Heart right ventricle (tissue), 16 donors: ENCODE measurements at regions of chr6 and their contacts with region 1.

Region 1: GRCh38 chr6:28266962-28267694 is at the start of gene ZSCAN26:
- DNase-seq: peak; percentile 87 to 91
- ATAC-seq: peak; percentile 95 to 99 (median 98)
- H3K4me3 ChIP-seq: peak within 1 kb of the TSS; percentile 48 to 90 (median 80)
- H3K27ac ChIP-seq: peak within 1 kb of the TSS; percentile 67 to 97 (median 84)
- H3K4me1 ChIP-seq: peaks cover 0 to 37% (median 18%) of the 10 kb centered on the region in 9 donors
- H3K27me3 ChIP-seq: no peaks in the 10 kb centered on the region
- CTCF ChIP-seq: no peak
- total RNA-seq, gene ZSCAN26: 8.9 to 17.8 (median 12.8) TPM

Region 2: DNA sequence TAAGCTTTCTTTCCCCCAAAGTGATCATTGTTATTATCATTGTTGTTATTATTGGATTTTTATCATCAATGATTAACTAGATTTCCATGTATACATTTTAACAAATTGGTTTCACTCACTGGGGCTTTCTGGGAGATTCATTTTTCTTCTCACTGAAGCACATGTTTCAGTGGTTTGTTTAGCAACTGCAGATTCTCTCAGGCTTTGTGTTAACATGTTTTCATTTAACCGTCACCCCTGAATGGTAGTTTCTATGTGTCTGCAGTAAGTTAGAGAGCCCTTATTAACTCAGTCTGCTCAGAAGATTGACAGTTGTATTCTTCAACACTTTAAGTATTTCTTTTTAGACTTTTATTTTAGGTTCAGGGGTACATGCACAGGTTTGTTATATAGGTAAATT is 27.5 kb before region 1 on chr6:
- intact Hi-C with region 1: no loop called
- DNase-seq: no peak
- ATAC-seq: no peak
- H3K4me3 ChIP-seq: no peak overlapping the region
- H3K27ac ChIP-seq: no peak overlapping the region
- H3K4me1 ChIP-seq: peaks cover 0 to 14% (median 0%) of the 10 kb centered on the region in 9 donors
- H3K27me3 ChIP-seq: no peaks in the 10 kb centered on the region
- CTCF ChIP-seq: no peak

Region 3: DNA sequence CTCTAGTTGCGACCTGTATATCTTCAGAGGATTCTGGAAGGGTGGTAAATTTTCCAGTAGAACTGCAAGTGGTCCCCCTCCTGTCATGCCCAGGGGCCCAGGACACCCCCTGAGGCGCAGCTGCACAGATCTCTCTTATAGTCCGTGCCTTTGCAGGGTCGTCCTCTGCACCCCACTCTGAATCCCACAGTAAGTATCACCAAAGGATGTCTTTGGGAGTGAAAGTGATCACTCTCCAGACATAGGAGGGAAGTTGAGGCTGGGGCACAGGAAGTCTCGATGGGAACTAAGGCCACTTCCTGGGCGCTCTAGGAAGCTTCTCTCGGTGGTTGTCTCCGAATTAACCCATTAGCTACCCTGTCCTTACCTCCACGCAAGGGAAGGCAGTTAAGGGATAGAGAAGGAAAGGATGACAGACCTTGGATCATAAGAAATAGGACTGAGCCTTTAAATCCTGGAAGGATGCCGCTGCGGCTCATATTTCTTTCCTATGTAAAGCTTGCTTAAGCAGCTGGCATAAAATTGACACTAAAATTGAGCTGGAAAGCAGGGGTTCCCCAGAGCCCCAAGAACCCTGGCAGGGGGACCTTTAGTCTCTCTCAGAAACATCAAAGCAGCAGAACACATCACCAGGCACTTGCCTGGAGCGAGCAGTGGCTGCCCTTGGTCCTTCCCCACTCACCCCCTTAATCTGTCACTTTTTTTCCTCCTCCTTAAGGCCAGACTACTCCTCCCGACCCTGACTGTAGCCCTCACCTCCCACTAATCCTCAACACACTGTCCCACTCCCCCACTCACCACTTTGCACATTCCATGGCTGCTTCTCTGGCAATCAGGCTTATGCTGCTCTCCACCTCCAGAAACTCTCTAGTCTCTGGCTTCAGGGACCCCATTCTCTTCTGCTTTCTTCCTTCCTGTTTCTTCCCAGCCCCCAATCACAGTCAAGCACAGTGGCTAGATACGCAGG is 14.8 kb before region 1 on chr6 and contains the start of gene ZKSCAN4:
- intact Hi-C with region 1: loop called in 1 of 10 experiments (anchors 1 kb)
- DNase-seq: peak; percentile 46 to 94
- ATAC-seq: peak; percentile 95 to 99 (median 98)
- H3K4me3 ChIP-seq: peak within 1 kb of the TSS; percentile 59 to 98 (median 89)
- H3K27ac ChIP-seq: peak within 1 kb of the TSS in 9 of 10 donors; percentile 28 to 87 (median 68)
- H3K4me1 ChIP-seq: peaks cover 9 to 36% (median 22%) of the 10 kb centered on the region in 9 donors
- H3K27me3 ChIP-seq: no peaks in the 10 kb centered on the region
- CTCF ChIP-seq: no peak
- total RNA-seq, gene ZKSCAN4: 0.55 to 3.6 (median 2.9) TPM

Region 4: GRCh38 chr6:28335564-28336283 is 68.6 kb after region 1 on chr6 and contains the start of gene ZSCAN31:
- intact Hi-C with region 1: loop called in 3 of 10 experiments (anchors 5 kb)
- DNase-seq: peak; percentile 87 to 97
- ATAC-seq: peak; percentile 95 to 99 (median 97)
- H3K4me3 ChIP-seq: peak within 1 kb of the TSS; percentile 56 to 90 (median 66)
- H3K27ac ChIP-seq: peak within 1 kb of the TSS; percentile 88 to 97 (median 92)
- H3K4me1 ChIP-seq: peaks cover 0 to 25% (median 11%) of the 10 kb centered on the region in 9 donors
- H3K27me3 ChIP-seq: no peaks in the 10 kb centered on the region
- CTCF ChIP-seq: no peak
- total RNA-seq, gene ZSCAN31: 8.0 to 17.4 (median 11.9) TPM

Region 5: GRCh38 chr6:28349892-28350737 is 83.0 kb after region 1 on chr6 and contains the start of gene ZKSCAN3:
- intact Hi-C with region 1: loop called in 4 of 10 experiments (anchors 5 to 10 kb)
- DNase-seq: peak; percentile 82 to 85
- ATAC-seq: peak; percentile 93 to 97 (median 96)
- H3K4me3 ChIP-seq: peak within 1 kb of the TSS; percentile 61 to 88 (median 78)
- H3K27ac ChIP-seq: peak within 1 kb of the TSS; percentile 28 to 90 (median 78)
- H3K4me1 ChIP-seq: peaks cover 3 to 36% (median 24%) of the 10 kb centered on the region in 9 donors
- H3K27me3 ChIP-seq: no peaks in the 10 kb centered on the region
- CTCF ChIP-seq: no peak
- total RNA-seq, gene ZKSCAN3: 3.1 to 6.8 (median 5.1) TPM